Activated CD4-positive, alpha-beta memory T cell treated with anti-CD3 and anti-CD28 coated beads for 36 hours (primary cell): ENCODE measurements at regions of chr4 and their contacts with region 1.

Region 1: DNA sequence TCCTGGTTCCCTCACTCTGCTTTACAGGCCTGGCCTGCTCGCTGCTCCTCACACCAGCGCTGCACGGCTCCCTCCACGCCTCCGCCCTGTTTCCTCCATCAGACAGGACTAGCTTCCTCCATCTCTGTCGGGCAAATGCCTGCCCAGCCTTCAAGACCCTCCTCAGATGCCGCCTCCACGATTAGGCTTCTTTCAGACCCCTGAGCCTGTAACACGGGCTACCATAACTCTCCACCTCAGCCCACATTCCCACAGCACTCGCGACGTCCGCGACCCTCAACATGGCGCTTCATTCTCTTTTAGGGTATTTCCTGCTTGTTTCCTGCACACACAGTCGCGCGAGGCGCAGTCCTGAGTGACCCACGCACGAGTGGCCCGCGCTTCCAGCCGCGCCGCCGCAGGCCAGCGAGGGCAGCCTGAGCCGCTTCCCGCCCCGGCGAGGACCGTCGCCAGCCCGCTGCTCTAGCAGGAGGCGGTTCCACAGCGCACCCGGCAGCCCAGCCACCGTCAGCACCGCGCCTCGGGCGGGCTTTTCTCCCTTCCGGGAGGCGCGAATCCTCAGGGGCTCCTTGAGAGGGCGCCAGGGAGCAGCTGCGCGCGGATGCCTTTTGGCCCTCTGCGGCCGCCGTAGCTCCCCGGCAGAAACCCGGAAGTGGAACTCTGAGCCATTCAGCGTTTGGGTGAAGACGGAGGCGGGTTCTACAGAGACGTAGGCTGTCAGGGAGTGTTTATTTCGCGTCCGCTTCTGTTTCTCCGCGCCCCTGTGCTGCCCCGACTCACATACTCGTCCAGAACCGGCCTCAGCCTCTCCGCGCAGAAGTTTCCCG is at the start of gene FRG1:
- DNase-seq: peak; percentile 97
- H3K4me3 Mint-ChIP-seq: peak within 1 kb of the TSS; percentile 90
- H3K27ac Mint-ChIP-seq: peak within 1 kb of the TSS; percentile 91
- H3K4me1 Mint-ChIP-seq: peaks cover 48% of the 10 kb centered on the region
- H3K27me3 Mint-ChIP-seq: peaks cover 1% of the 10 kb centered on the region
- total RNA-seq, gene FRG1: 69.4 to 69.6 TPM

Region 2: DNA sequence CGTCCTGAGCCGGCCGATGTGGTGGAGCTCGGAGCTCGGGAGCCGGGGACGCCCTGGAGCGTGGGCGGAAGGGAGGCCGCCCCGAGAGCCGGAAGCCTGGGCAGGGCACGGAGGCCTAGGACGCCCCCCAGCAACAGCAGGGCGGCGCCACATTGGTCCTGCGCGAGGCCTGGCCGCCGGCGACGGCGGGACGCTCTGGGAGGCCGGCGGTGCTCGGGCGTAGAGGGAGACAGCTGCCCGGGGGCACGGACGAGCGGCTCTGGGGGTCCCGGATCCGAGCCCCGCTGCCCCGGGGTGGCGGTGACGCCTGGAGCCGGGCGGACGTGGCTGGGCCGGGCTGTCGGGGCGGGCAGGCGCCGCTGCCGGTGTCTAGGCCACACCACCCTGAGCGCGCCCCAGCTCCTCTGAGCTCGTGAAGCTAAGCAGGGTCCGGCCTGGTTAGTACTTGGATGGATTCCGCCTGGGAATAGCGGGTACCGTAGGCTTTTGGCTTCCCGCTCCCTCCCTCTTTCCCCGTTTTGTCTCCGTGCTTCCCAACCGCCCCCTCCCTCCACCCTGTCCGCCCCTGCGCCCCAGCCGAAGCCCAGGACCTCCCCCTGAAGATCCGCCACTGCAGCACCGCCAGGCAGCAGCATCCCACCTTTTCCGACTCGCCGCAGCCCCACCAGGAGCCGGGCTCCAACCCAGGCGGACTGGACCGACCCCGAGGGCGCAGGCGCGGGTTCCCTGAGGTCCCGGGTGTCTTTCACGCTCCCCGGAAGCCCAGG is 74.6 kb after region 1 on chr4:
- CTCF ChIA-PET with region 1: no interaction called
- POLR2A ChIA-PET with region 1: no interaction called
- intact Hi-C with region 1: loop called (anchors 5 kb)
- DNase-seq: peak; percentile 22
- H3K4me3 Mint-ChIP-seq: no peak overlapping the region
- H3K27ac Mint-ChIP-seq: no peak overlapping the region
- H3K4me1 Mint-ChIP-seq: peaks cover 22% of the 10 kb centered on the region
- H3K27me3 Mint-ChIP-seq: peaks cover 64% of the 10 kb centered on the region